PC-3 (cell line): ENCODE measurements at regions of chr5 and their contacts with region 1.

Region 1: DNA sequence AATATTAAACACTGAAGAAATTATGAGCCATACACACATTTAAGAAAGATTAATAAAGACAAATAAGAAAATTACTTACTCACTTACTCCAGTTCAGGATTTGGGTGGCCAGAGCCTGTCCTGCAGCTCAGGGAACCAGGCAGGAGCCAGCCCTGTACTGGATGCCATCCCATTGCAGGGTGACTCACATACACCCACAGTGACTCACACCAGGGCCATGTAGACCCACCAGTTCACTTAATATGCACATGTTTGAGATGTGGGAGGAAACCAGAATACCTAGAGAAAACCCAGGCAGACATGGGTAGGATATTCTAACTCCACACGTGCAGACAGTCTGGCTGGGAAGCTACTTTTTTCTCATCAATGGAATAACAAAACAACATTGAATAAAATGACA is 49.6 kb upstream of the ADRB2 start:
- DNase-seq: peak; percentile 99
- ATAC-seq: peak; percentile 100
- H3K4me3 ChIP-seq: no peak overlapping the region
- H3K27ac ChIP-seq: peak overlapping the region; percentile 67
- H3K4me1 ChIP-seq: peaks cover 27% of the 10 kb centered on the region
- H3K27me3 ChIP-seq: no peaks in the 10 kb centered on the region
- CTCF ChIP-seq: no peak

Region 2: GRCh38 chr5:148791334-148791667 is 14.5 kb after region 1 on chr5:
- CTCF ChIA-PET with region 1: no interaction called
- POLR2A ChIA-PET with region 1: interaction called, 3 read pairs
- intact Hi-C with region 1: loop called (anchors 2 kb)
- DNase-seq: peak; percentile 95
- ATAC-seq: peak; percentile 62
- H3K4me3 ChIP-seq: peak overlapping the region; percentile 22; the same call in 1 of the 2 replicates
- H3K27ac ChIP-seq: peak overlapping the region; percentile 93
- H3K4me1 ChIP-seq: peaks cover 76% of the 10 kb centered on the region
- H3K27me3 ChIP-seq: no peaks in the 10 kb centered on the region
- CTCF ChIP-seq: no peak

Region 3: GRCh38 chr5:148849461-148849860 is 72.7 kb after region 1 on chr5:
- CTCF ChIA-PET with region 1: no interaction called
- POLR2A ChIA-PET with region 1: no interaction called
- intact Hi-C with region 1: no loop called
- DNase-seq: no peak
- ATAC-seq: no peak
- H3K4me3 ChIP-seq: no peak overlapping the region
- H3K27ac ChIP-seq: no peak overlapping the region
- H3K4me1 ChIP-seq: peaks cover 18% of the 10 kb centered on the region
- H3K27me3 ChIP-seq: no peaks in the 10 kb centered on the region
- CTCF ChIP-seq: no peak